ENCODE measurements at regions of chr17 and their contacts with region 1.

Region 1: GRCh38 chr17:6831661-6832263 is at the start of gene TEKT1:
- DNase-seq: peak; percentile 73
- CTCF ChIP-seq: no peak

Region 2: GRCh38 chr17:6413065-6413464 is 418.7 kb before region 1 on chr17:
- in situ Hi-C with region 1: no loop called
- DNase-seq: peak; percentile 70
- CTCF ChIP-seq: peak; percentile 35

Region 3: DNA sequence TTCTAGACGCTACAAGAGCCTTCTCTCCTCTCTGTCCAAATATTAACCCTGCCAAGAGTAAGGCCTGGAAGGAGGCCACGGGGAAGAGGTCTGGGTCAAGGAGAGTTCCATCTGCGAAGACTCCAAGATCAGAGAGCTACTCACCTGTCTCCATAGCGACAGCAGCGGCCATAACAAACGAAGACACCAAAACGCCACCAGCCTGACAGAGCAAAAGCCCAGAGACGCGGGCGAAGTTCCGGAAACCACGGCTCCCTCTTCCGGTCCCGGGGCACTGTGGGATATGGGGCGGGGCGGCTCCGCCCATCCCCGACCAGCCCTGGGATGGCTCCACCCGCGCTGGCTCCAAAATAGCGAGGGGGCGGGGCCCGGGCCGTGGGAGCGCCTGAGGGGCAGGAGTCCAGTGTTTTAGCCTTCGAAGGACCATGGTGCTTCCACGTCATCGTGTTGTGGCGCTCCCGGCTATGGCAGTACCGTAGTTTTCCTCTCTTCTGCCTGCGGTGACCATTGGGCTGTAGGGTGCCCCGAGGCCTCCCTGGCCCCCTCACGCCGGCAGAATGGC is 180.3 kb before region 1 on chr17 and contains the starts of genes C17orf100 and MED31:
- in situ Hi-C with region 1: loop called (anchors 25 kb)
- DNase-seq: peak; percentile 96
- CTCF ChIP-seq: no peak